Brain microvascular endothelial cell (primary cell): ENCODE measurements at regions of chr4 and their contacts with region 1.

Region 1: GRCh38 chr4:94641702-94642560 is 115.8 kb upstream of the BMPR1B start:
- DNase-seq: no peak
- H3K4me3 ChIP-seq: no peak overlapping the region
- H3K27ac ChIP-seq: peak overlapping the region; percentile 79
- H3K27me3 ChIP-seq: no peaks in the 10 kb centered on the region
- CTCF ChIP-seq: no peak

Region 2: DNA sequence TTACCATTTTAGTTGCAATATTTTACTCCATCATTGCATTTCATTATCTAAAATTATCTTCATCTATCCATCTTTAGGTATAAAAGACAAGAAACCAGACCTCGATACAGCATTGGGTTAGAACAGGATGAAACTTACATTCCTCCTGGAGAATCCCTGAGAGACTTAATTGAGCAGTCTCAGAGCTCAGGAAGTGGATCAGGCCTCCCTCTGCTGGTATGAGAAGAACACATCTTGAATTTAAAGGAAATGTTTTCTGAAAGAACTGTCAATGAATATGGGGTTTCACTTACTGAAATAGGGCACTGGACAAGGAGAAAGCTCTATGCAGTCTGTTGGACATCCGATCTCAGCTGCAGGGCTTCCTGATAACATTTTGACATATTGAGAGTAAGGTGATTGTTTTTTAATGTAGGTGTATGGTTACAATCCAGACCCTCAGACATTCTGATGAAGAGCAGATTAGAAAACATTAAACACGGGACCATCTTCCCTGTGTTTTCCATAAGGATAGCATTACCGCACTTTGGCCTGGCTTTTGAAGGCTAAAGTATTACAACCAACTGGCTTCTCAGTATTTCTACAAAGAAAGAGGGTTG is 483.1 kb after region 1 on chr4:
- in situ Hi-C with region 1: loop called (anchors 25 kb)
- DNase-seq: peak; percentile 61
- H3K4me3 ChIP-seq: no peak overlapping the region
- H3K27ac ChIP-seq: no peak overlapping the region
- H3K27me3 ChIP-seq: no peaks in the 10 kb centered on the region
- CTCF ChIP-seq: peak; percentile 78